Naive thymus-derived CD4-positive, alpha-beta T cell (primary cell): ENCODE measurements at regions of chr3 and their contacts with region 1.

Region 1: DNA sequence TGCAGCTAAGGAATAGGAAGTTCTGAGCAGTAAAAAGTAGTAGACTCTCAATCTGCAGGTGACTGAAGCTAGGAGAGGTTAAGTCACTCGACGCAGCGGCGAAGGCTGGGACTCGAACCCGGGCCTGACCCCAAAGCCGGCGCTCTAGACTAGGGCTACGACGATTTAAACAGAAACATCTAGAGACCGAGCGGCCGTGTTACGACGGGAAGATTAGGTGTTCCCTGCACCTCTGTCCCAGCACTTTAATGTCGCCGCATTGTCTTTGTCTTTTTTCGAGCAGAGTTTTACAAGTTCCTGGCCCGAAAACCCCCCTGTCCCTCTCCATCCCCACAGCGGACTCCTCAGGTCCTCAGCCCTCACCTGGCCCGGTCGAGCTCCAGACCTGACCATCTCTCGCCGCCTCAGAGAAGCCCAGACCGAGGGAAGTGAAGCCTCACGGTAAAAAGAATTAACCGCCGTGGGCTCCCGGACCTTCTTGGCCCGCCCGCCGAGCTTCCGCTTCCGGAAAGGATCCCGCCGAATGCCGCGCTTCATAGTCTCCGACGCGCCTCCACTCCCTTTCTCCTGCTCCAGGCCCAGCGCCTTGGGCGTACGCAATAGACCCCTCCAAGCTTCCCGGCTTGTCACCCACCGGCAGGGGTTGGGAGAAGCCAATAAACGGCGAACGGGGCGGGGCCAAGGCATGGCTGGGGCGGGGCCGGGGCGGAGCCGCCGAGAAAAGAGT is at the start of gene CCDC14:
- DNase-seq: peak; percentile 43 to 81 (median 60)
- ATAC-seq: peak; percentile 91
- H3K4me3 ChIP-seq: peak within 1 kb of the TSS; percentile 85
- H3K4me3 Mint-ChIP-seq: peak within 1 kb of the TSS; percentile 93 to 98 (median 96)
- H3K27ac ChIP-seq: peak within 1 kb of the TSS; percentile 78
- H3K27ac Mint-ChIP-seq: peak within 1 kb of the TSS; percentile 82 to 96 (median 91)
- H3K4me1 ChIP-seq: peaks cover 0 to 12% of the 10 kb centered on the region in 2 donors
- H3K4me1 Mint-ChIP-seq: peaks cover 12 to 35% (median 30%) of the 10 kb centered on the region in 7 donors
- H3K27me3 ChIP-seq: no peaks in the 10 kb centered on the region
- H3K27me3 Mint-ChIP-seq: peaks cover 0 to 30% (median 8%) of the 10 kb centered on the region in 5 donors
- total RNA-seq, gene CCDC14: 24.6 to 48.1 (median 37.3) TPM

Region 2: DNA sequence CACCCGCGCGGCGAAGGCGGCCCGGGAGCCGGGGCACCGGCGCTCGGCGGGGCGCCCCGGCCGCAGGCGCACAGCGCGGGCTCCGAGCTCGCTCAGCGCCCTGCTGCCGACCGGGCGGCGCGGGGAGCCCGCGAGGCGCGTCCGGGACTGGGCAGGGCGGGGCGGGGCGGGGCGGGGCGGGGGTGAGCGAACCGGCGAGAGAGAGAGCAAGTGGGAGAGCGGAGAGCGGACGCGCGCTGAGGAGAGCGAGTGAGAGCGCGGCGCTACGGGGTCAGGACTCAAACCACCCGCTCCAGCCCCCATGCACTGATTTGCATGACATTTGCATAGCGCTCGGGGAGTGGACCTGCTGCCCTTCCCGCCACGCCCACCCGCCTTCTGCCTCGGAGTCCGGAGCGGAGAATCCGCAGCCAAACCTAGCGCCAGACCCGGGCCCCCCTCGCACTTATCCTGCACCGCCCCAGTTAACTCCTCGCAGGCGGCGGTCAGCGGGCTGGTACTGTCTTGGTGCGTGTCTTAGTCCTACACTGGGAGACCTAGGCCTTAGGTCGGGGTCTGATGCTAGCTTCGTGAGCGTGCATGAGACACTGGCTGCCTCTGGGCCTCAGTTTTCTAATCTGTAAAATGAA is 76.6 kb before region 1 on chr3 and contains the start of gene MYLK:
- CTCF ChIA-PET with region 1: no interaction called
- POLR2A ChIA-PET with region 1: no interaction called
- intact Hi-C with region 1: loop called in 1 of 2 experiments (anchors 2 kb)
- DNase-seq: peak in 1 of 9 donors; percentile 55
- ATAC-seq: peak; percentile 66
- H3K4me3 ChIP-seq: no peak within 1 kb of the TSS
- H3K4me3 Mint-ChIP-seq: peak within 1 kb of the TSS; percentile 3 to 83 (median 66)
- H3K27ac ChIP-seq: no peak within 1 kb of the TSS
- H3K27ac Mint-ChIP-seq: no peak within 1 kb of the TSS
- H3K4me1 ChIP-seq: no peaks in the 10 kb centered on the region
- H3K4me1 Mint-ChIP-seq: peaks cover 5 to 18% (median 14%) of the 10 kb centered on the region in 7 donors
- H3K27me3 ChIP-seq: no peaks in the 10 kb centered on the region
- H3K27me3 Mint-ChIP-seq: peaks cover 55 to 62% (median 58%) of the 10 kb centered on the region in 5 donors
- total RNA-seq, gene MYLK: 0.07 to 2.3 (median 0.35) TPM in 3 of 5 experiments, not detected in the others

Region 3: GRCh38 chr3:124032648-124033359 is 71.9 kb after region 1 on chr3:
- CTCF ChIA-PET with region 1: no interaction called
- POLR2A ChIA-PET with region 1: no interaction called
- intact Hi-C with region 1: loop called in 1 of 2 experiments (anchors 2 kb)
- DNase-seq: peak; percentile 8 to 80 (median 39)
- ATAC-seq: peak; percentile 88
- H3K4me3 ChIP-seq: no peak overlapping the region
- H3K4me3 Mint-ChIP-seq: peak overlapping the region; percentile 63 to 89 (median 82)
- H3K27ac ChIP-seq: no peak overlapping the region
- H3K27ac Mint-ChIP-seq: no peak overlapping the region
- H3K4me1 ChIP-seq: no peaks in the 10 kb centered on the region
- H3K4me1 Mint-ChIP-seq: peaks cover 6 to 19% (median 12%) of the 10 kb centered on the region in 7 donors
- H3K27me3 ChIP-seq: peaks cover 3 to 7% of the 10 kb centered on the region in 2 donors
- H3K27me3 Mint-ChIP-seq: peaks cover 32 to 47% (median 36%) of the 10 kb centered on the region in 5 donors